Activated CD4-positive, alpha-beta T cell treated with anti-CD3 and anti-CD28 coated beads for 36 hours (primary cell): ENCODE measurements at regions of chr6 and their contacts with region 1.

Region 1: DNA sequence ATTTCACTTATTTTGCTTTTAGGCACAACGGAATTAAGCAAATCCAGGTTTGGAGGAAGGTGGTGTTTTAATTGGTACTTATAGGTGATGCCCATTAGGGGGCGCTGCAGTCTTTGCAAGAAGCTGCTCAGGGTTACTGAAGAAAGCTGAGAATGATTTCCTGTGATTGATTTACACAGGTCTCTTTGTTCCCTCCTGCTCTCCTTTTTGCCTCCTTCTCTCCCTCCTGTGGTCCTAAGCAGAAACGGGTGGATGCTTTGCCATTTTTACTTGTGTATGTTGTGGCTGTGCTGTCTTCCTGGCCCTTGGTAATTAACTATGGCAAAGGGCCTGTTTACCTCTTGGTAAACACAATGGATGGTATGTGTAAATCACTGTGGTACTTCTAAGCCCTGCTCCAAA is 97.8 kb downstream of the ANKS1A start:
- DNase-seq: peak; percentile 82
- ATAC-seq: peak; percentile 70
- H3K4me3 Mint-ChIP-seq: no peak overlapping the region
- H3K27ac Mint-ChIP-seq: no peak overlapping the region
- H3K4me1 Mint-ChIP-seq: no peaks in the 10 kb centered on the region
- H3K27me3 Mint-ChIP-seq: no peaks in the 10 kb centered on the region

Region 2: GRCh38 chr6:34967441-34967840 is 19.4 kb before region 1 on chr6:
- CTCF ChIA-PET with region 1: interaction called, 13 read pairs
- POLR2A ChIA-PET with region 1: no interaction called
- intact Hi-C with region 1: no loop called
- DNase-seq: no peak
- ATAC-seq: no peak
- H3K4me3 Mint-ChIP-seq: no peak overlapping the region
- H3K27ac Mint-ChIP-seq: no peak overlapping the region
- H3K4me1 Mint-ChIP-seq: peaks cover 2% of the 10 kb centered on the region
- H3K27me3 Mint-ChIP-seq: no peaks in the 10 kb centered on the region

Region 3: DNA sequence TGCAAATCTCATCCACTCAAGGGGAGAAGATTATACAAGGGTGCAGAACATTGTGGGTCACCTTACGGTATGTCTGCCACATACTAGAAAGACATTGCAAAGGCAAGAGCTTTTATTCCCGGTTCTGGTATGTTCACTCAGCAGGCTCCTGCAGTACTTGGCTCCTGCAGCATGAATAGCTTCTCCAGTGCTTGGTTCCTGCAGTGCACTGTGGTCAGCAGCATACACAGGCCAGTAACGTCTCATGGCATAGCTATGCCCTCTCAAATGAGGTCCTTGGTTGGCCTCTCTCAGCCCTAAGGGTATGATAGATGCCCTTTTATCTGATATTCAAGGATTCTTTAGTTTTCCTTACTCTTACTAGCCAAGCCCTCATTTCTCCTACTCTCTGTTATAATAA is 141.7 kb after region 1 on chr6:
- CTCF ChIA-PET with region 1: interaction called, 11 read pairs
- POLR2A ChIA-PET with region 1: no interaction called
- intact Hi-C with region 1: no loop called
- DNase-seq: no peak
- ATAC-seq: no peak
- H3K4me3 Mint-ChIP-seq: no peak overlapping the region
- H3K27ac Mint-ChIP-seq: no peak overlapping the region
- H3K4me1 Mint-ChIP-seq: no peaks in the 10 kb centered on the region
- H3K27me3 Mint-ChIP-seq: peaks cover 3% of the 10 kb centered on the region

Region 4: GRCh38 chr6:35146453-35146852 is 159.6 kb after region 1 on chr6:
- CTCF ChIA-PET with region 1: interaction called, 10 read pairs
- POLR2A ChIA-PET with region 1: no interaction called
- intact Hi-C with region 1: no loop called
- DNase-seq: peak; percentile 70
- ATAC-seq: no peak
- H3K4me3 Mint-ChIP-seq: no peak overlapping the region
- H3K27ac Mint-ChIP-seq: no peak overlapping the region
- H3K4me1 Mint-ChIP-seq: peaks cover 24% of the 10 kb centered on the region
- H3K27me3 Mint-ChIP-seq: peaks cover 14% of the 10 kb centered on the region

Region 5: GRCh38 chr6:35240840-35241801 is 254.3 kb after region 1 on chr6:
- CTCF ChIA-PET with region 1: interaction called, 32 read pairs
- POLR2A ChIA-PET with region 1: no interaction called
- intact Hi-C with region 1: loop called (anchors 1 to 5 kb)
- DNase-seq: peak; percentile 86
- ATAC-seq: peak; percentile 96
- H3K4me3 Mint-ChIP-seq: no peak overlapping the region
- H3K27ac Mint-ChIP-seq: no peak overlapping the region
- H3K4me1 Mint-ChIP-seq: no peaks in the 10 kb centered on the region
- H3K27me3 Mint-ChIP-seq: no peaks in the 10 kb centered on the region